SK-N-SH (cell line): ENCODE measurements at regions of chr22 and their contacts with region 1.

Region 1: GRCh38 chr22:45863981-45864751 is 112.8 kb downstream of the WNT7B start:
- DNase-seq: peak; percentile 87
- H3K4me3 ChIP-seq: peak overlapping the region in 1 of 2 experiments; percentile 29; a peak in 1 of 4 replicates
- H3K27ac ChIP-seq: no peak overlapping the region
- H3K4me1 ChIP-seq: no peaks in the 10 kb centered on the region
- H3K27me3 ChIP-seq: no peaks in the 10 kb centered on the region
- CTCF ChIP-seq: peak; percentile 84
- EP300 ChIP-seq: no peak
- RAD21 ChIP-seq: peak; percentile 67

Region 2: GRCh38 chr22:45645526-45646414 is 218.4 kb before region 1 on chr22:
- CTCF ChIA-PET with region 1: interaction called, 97 read pairs
- POLR2A ChIA-PET with region 1: no interaction called
- DNase-seq: peak; percentile 94
- H3K4me3 ChIP-seq: peak overlapping the region in 1 of 2 experiments; percentile 35; a peak in 2 of 4 replicates
- H3K27ac ChIP-seq: no peak overlapping the region
- H3K4me1 ChIP-seq: no peaks in the 10 kb centered on the region; a peak in 1 of 4 replicates
- H3K27me3 ChIP-seq: no peaks in the 10 kb centered on the region
- CTCF ChIP-seq: peak; percentile 81
- EP300 ChIP-seq: no peak
- RAD21 ChIP-seq: peak; percentile 91

Region 3: DNA sequence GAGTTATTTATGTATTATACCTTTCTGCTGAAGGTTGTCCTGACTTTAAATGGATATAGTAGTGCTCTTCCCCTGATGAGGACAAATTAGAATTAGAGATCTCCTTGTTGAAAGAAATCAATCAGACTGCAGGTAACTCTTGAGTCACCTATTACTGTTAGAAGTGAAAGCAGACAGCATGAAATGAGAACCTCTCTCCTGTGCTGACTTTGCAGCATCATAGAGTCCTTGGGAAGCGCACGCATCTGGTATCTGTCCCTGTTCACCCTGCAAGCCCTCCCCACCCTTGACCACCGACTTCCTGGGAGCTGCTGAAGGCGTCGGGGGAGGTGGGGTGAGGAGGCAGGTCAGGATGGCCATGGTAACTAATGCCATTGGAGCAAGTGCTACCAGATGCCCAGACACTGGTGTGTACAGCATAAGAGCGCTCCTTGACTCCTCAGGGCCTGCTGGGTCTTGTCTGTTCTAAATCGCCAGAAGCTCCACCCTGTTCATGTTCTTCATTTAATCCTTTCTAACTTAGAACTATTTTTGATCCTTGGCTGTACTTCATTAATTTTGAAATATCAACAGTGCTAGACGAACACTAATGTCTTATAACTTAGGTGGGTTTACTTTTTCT is 31.1 kb before region 1 on chr22:
- CTCF ChIA-PET with region 1: interaction called, 10 read pairs
- POLR2A ChIA-PET with region 1: no interaction called
- DNase-seq: no peak
- H3K4me3 ChIP-seq: no peak overlapping the region
- H3K27ac ChIP-seq: no peak overlapping the region
- H3K4me1 ChIP-seq: no peaks in the 10 kb centered on the region; a peak in 1 of 4 replicates
- H3K27me3 ChIP-seq: no peaks in the 10 kb centered on the region
- CTCF ChIP-seq: no peak
- EP300 ChIP-seq: no peak
- RAD21 ChIP-seq: no peak

Region 4: DNA sequence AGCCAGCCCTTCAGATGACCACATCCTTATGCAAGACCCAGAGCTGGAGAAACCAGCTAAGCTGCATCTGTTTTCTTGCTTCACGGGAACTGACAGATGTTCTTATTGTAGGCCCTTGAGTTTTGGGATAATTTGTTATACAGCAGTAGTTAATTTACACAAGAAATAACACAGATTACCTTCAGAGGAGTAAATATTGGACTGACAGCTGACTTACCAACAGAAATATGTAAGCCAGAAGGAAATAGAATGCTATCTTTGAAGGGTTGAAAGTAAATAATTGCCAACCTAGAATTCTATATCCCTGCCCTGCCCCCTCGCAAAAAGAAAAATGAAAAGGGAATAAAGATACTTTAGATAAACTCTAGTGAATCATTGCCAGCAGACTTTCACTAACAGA is 11.3 kb before region 1 on chr22:
- CTCF ChIA-PET with region 1: interaction called, 19 read pairs
- POLR2A ChIA-PET with region 1: no interaction called
- DNase-seq: no peak
- H3K4me3 ChIP-seq: no peak overlapping the region; a peak in 1 of 4 replicates
- H3K27ac ChIP-seq: no peak overlapping the region
- H3K4me1 ChIP-seq: no peaks in the 10 kb centered on the region
- H3K27me3 ChIP-seq: no peaks in the 10 kb centered on the region
- CTCF ChIP-seq: no peak
- EP300 ChIP-seq: no peak
- RAD21 ChIP-seq: no peak

Region 5: DNA sequence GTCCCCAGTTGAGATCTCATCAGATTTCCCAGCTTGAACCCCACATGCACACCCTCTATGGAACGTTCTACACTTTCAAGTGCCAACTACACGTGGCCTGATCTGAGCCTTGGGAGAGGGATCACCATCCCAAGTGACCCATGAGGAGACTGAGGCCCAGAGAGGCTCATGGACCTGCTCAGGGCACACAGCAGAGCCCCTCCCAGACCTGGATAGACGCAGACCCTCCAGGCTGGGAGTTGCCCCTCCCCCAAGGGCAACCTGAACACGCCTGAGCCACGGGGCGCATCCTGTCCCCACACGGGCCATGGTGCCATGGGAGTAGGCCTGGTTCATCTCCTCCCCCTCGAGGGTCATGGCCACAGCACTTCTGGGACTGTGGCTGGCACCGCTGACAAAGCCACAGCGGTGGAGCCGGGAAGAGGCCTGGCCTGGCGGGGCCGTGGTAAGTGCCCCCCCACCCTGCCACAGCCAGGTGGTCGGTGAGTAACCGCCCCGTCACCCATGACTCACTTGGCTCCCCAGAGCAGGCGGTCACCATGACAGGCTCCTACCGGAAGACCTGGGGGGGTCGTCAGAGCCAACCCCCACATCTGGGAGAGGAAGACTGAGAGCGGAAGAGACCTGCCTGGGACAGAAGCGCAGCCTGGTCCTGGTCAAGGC is 104.7 kb after region 1 on chr22:
- CTCF ChIA-PET with region 1: interaction called, 26 read pairs
- POLR2A ChIA-PET with region 1: no interaction called
- DNase-seq: peak; percentile 24
- H3K4me3 ChIP-seq: no peak overlapping the region
- H3K27ac ChIP-seq: no peak overlapping the region
- H3K4me1 ChIP-seq: peaks cover 4 to 5% of the 10 kb centered on the region in 2 experiments; a peak in 2 of 4 replicates
- H3K27me3 ChIP-seq: peaks cover 29% of the 10 kb centered on the region
- CTCF ChIP-seq: no peak
- EP300 ChIP-seq: peak in 1 of 2 experiments; percentile 87; a peak in 2 of 4 replicates
- RAD21 ChIP-seq: no peak